Ascending aorta (tissue), 2 donors: ENCODE measurements at regions of chr1 and their contacts with region 1.

Region 1: GRCh38 chr1:40241362-40241761 is 6.4 kb upstream of the TMCO2 start:
- DNase-seq: no peak
- H3K4me3 ChIP-seq: no peak overlapping the region
- H3K27ac ChIP-seq: no peak overlapping the region
- H3K4me1 ChIP-seq: peaks cover 0 to 12% of the 10 kb centered on the region in 2 donors
- H3K27me3 ChIP-seq: no peaks in the 10 kb centered on the region
- CTCF ChIP-seq: no peak

Region 2: DNA sequence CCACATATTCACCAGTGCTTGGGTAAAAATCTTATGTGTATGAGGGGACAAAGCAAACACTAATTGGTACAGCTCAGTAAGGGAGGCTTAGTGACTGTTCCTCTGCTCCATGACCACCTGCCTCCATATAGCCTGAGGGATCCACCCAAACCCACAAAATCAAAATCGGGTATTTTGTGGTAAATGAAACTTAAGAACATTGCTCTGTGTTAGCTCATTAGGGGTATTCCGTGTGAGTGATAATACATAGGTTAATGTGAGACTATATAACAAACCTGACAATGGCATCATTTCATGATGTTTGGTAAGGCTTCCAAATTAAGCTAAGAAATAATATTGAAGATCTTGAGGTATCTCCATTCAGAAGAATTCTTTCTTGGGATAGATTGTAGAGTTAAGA is 49.9 kb after region 1 on chr1:
- intact Hi-C with region 1: loop called (anchors 5 kb)
- DNase-seq: no peak
- H3K4me3 ChIP-seq: no peak overlapping the region
- H3K27ac ChIP-seq: no peak overlapping the region
- H3K4me1 ChIP-seq: no peaks in the 10 kb centered on the region
- H3K27me3 ChIP-seq: no peaks in the 10 kb centered on the region
- CTCF ChIP-seq: no peak